ENCODE measurements at regions of chr5 and their contacts with region 1.

Region 1: DNA sequence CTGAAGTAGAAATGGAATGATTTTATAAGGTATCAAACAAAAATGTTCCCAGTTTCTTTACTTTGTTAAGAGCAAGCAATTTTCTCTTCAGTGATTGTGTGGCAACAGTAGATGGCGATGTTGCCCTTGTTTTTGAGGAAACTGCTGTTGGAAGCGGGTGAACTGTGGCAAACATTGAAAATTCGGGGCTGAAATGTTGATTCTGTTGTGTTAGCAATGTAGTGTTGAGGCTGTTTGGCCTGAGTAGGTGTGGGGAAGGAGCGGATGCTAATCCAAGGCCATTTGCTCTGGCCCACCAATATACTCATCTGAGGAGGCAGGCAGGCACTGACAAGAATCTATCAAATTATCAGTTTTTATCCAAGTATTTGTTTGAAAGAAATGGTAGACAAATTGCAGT is 129.8 kb downstream of the SLC12A2 start:
- DNase-seq: no peak
- H3K4me3 ChIP-seq: no peak overlapping the region
- H3K27ac ChIP-seq: no peak overlapping the region
- H3K4me1 ChIP-seq: no peaks in the 10 kb centered on the region
- H3K27me3 ChIP-seq: no peaks in the 10 kb centered on the region
- CTCF ChIP-seq: peak in 2 of 3 experiments; percentile 50 to 68
- POLR2A ChIP-seq: no peak

Region 2: GRCh38 chr5:128135286-128135685 is 78.1 kb before region 1 on chr5:
- intact Hi-C with region 1: no loop called
- DNase-seq: no peak
- H3K4me3 ChIP-seq: no peak overlapping the region
- H3K27ac ChIP-seq: no peak overlapping the region
- H3K4me1 ChIP-seq: no peaks in the 10 kb centered on the region
- H3K27me3 ChIP-seq: no peaks in the 10 kb centered on the region
- CTCF ChIP-seq: no peak
- POLR2A ChIP-seq: no peak

Region 3: DNA sequence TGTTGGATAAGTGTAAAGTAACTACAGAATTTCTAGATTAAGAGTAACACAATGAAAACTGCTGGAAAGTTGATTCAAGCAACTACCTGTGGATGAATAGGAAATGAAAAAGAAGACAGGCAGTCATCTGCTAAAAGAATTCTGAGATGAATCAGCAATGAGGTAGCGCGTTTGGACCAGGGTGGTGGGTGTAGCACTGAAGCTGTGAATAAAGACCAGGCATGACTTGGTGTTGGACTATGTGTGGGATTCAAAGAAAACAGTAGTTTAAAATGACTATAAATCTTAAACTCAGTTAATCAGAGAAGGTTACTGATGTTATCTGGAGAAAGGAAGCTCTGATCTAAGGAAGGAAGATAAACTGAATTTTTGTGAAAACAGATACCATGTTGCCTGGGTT is 164.9 kb after region 1 on chr5:
- intact Hi-C with region 1: no loop called
- DNase-seq: no peak
- H3K4me3 ChIP-seq: no peak overlapping the region
- H3K27ac ChIP-seq: no peak overlapping the region
- H3K4me1 ChIP-seq: no peaks in the 10 kb centered on the region
- H3K27me3 ChIP-seq: no peaks in the 10 kb centered on the region
- CTCF ChIP-seq: no peak
- POLR2A ChIP-seq: no peak

Region 4: GRCh38 chr5:128506643-128507042 is 293.3 kb after region 1 on chr5:
- intact Hi-C with region 1: loop called (anchors 10 kb)
- DNase-seq: no peak
- H3K4me3 ChIP-seq: no peak overlapping the region
- H3K27ac ChIP-seq: no peak overlapping the region
- H3K4me1 ChIP-seq: no peaks in the 10 kb centered on the region
- H3K27me3 ChIP-seq: no peaks in the 10 kb centered on the region
- CTCF ChIP-seq: no peak
- POLR2A ChIP-seq: no peak

Measured in vagina (tissue), 2 donors.